ENCODE measurements at regions of chr11 and their contacts with region 1.

Region 1: DNA sequence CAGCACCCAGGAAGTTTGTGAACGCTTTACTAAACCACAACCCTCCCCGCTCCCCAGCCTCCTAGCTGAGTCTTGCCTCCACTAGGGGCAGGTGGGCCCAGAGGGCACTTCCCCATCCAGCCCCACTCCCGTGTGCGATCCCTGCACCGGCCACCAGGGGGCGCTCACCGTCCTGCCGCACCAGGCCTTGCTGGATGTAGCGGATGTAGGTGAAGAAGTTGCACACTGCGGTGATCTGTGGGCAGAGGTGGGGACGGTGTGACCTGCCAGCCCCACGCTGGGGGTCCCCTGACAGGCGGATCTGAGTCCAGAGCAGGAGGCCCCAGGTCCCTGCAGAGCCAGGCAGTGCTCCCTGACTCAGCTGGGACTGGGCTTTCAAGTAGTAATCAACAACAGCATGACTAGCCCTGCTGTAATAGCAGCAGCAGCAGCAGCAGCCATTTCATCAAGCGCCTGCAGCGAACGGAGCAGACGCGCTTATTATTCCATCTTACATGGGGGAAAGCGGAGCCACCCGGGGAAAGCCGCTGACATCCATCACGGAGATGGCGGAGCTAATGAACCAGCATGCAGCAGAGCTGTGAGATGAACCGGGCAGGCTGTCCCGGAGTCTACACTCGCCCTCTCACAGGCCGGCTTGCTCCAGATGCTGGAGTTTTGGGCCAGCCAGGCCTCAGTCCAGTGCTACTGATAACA is 7.9 kb upstream of the FADS3 start:
- DNase-seq: peak; percentile 52
- H3K4me3 ChIP-seq: no peak overlapping the region
- H3K27ac ChIP-seq: no peak overlapping the region
- H3K4me1 ChIP-seq: peaks cover 19% of the 10 kb centered on the region
- H3K27me3 ChIP-seq: no peaks in the 10 kb centered on the region
- CTCF ChIP-seq: peak; percentile 96 to 99

Region 2: GRCh38 chr11:61947486-61948210 is 48.4 kb after region 1 on chr11:
- CTCF ChIA-PET with region 1: interaction called, 11 read pairs
- dilution Hi-C with region 1: no loop called
- in situ Hi-C with region 1: loop called in 1 of 2 experiments (anchors 5 kb)
- intact Hi-C with region 1: loop called (anchors 1 kb)
- DNase-seq: peak; percentile 59
- H3K4me3 ChIP-seq: no peak overlapping the region
- H3K27ac ChIP-seq: no peak overlapping the region
- H3K4me1 ChIP-seq: no peaks in the 10 kb centered on the region
- H3K27me3 ChIP-seq: no peaks in the 10 kb centered on the region
- CTCF ChIP-seq: peak; percentile 97 to 98

Region 3: DNA sequence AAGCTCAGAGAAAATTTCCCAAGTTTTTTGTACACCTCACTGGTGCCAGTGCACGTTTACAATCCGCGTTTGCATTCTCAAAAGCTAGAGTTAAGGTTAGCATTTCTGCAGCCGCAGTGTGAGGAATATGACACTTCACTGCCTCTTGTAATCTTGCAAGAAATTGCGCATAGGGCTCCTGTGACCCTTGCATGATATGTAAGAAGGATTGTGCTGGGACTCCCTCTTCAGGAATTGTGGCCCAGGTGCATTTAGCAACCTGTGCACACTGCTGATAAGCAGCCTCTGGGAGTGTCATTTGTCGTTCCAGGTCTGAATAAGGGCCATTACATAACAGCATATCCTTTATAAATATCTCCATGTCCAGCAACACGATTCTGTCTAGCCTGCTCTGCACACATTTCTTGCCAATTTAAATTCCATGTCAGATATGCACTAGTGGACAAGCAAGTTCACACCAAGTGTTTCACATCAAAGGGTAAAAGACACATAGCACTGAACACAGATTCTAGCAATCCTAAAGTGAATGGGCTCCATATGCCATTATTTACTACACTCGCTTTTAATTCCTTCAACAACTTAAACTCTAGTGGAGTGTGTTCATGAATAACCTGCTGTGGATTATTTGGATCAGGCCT is 155.3 kb after region 1 on chr11:
- CTCF ChIA-PET with region 1: no interaction called
- dilution Hi-C with region 1: no loop called
- in situ Hi-C with region 1: no loop called
- intact Hi-C with region 1: loop called (anchors 1 kb)
- DNase-seq: peak; percentile 42
- H3K4me3 ChIP-seq: no peak overlapping the region
- H3K27ac ChIP-seq: no peak overlapping the region
- H3K4me1 ChIP-seq: peaks cover 8% of the 10 kb centered on the region
- H3K27me3 ChIP-seq: no peaks in the 10 kb centered on the region
- CTCF ChIP-seq: peak; percentile 74 to 87

Region 4: DNA sequence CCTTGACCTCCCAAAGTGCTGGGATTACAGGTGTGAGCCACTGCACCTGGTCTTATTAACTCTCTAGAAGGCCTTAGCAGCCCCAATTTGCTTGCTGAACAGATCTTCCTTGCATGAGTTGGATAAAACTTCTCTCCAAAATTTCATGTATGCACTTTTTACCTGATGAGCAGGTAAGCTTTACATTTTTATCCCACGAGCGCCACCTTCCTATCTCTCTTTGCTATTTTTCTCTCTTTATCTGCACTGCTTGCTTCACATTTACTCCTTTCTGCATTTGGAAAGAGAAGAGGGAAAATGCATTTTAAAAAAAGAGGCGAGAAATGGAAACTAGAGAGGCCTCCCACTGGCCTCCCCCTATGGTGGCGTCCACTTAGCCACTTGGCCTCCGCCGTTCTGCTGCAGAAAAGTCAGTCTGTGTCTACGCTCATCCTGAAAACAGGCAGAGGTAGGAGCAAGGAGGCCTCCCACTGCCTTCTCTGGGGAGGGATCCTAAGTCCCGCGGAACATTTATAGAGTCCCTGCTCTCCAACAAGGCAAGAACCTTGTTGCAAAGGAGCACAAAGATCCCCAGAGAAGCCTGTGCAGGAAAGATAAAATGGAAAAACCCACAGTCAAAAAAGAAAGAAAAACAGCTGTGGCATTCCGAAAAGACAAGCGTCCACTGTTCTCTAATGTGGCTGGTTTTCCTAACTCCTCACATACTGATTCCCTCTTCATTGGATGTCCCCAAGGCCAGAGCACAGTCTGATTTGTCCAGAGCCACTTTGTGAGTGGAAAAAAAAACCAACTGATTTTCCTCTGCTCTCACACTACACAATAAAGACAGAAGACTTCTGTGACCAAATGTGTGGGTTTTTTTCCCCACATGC is 162.3 kb after region 1 on chr11:
- CTCF ChIA-PET with region 1: no interaction called
- dilution Hi-C with region 1: no loop called
- in situ Hi-C with region 1: no loop called
- intact Hi-C with region 1: loop called (anchors 1 kb)
- DNase-seq: peak; percentile 29
- H3K4me3 ChIP-seq: no peak overlapping the region
- H3K27ac ChIP-seq: no peak overlapping the region
- H3K4me1 ChIP-seq: no peaks in the 10 kb centered on the region
- H3K27me3 ChIP-seq: no peaks in the 10 kb centered on the region
- CTCF ChIP-seq: peak; percentile 36 to 51

Region 5: DNA sequence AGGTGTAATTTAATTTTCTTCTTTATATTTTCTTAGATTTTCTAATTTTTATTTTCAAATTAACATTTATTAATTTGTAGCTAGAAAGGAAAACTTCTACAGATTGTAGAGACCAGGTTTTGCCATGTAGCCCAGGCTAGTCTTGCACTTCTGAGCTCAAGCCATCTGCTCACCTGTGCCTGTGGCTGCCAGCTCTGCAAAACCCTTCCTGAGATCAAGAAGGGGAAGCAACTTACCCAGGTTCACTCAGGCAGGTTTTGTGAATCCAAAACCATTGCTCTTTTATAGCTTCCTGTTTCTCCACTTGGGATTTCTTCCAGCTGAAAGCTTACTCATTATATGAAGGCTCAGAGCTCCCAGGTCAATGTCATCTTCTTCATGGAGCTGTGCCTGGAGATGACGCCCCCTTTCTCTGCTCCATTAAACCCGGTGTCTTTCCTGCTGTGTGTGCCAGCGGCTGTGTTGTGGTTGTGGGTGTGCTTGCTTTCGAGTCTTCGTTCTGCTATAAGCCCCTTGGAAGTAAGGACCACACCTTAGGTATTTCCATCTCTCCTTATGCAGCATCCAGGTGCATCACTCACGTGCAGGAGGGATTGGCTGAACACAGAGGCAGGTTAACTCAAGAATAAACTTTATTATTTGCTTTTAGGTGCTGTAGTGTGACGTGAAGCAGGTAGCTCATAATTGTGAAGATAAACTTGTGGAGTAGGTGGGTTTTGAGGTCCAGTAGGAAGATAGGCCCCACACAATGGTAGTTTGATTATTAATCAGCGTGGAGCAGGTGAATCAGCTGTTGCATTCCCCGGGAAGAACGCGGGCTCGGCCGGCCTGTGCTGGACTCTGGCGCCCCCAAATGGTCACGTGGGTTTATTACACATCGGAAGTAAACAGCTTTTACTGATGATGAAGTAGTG is 182.3 kb after region 1 on chr11:
- CTCF ChIA-PET with region 1: interaction called, 20 read pairs
- dilution Hi-C with region 1: no loop called
- in situ Hi-C with region 1: loop called in 1 of 2 experiments (anchors 5 kb)
- intact Hi-C with region 1: loop called (anchors 1 kb)
- DNase-seq: peak; percentile 57
- H3K4me3 ChIP-seq: no peak overlapping the region
- H3K27ac ChIP-seq: no peak overlapping the region
- H3K4me1 ChIP-seq: peaks cover 6% of the 10 kb centered on the region
- H3K27me3 ChIP-seq: no peaks in the 10 kb centered on the region
- CTCF ChIP-seq: peak; percentile 82 to 91